ENCODE measurements at regions of chr16 and their contacts with region 1.

Region 1: DNA sequence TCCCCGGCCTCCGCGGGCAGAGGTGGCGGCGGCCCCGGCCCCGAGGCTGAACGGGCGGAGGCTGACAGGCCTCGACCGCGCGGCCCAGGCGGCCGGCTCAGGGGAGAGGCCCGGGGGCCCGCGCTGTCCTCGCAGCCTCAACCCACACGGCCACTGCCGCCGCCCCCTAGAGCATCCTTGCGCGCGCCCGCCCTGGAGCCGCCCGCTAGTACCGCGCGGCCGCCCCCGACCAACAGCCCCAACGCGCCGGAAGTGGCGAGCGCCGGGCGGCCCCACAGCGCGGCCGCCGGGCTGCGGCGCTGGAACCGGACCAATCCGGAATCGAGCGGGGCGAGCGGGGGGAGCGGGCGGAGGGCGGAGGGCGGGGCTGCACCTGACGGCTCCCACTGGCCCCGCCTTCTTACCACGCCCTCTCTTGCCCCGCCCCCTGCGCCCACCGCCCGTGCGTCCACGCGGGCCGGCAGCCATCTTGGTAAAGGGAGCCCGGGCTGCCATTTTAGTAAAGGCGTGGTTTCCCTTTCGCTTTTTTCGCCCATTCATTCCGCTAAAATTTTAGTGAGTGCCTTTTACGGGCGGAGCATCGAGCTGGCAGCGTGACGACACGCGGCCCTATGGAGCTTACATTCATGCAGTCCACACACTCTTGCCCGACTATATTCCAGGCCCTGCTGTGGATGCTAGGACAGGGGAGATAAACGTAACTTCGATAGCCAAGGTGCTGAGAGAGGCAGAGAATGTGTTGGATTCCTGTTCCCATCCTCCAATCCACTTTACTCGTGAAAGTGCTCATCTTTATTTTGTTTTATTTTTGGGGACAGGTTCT is at the start of gene XPO6:
- DNase-seq: peak; percentile 96 to 100 (median 99)
- ATAC-seq: peak; percentile 90
- H3K4me3 ChIP-seq: peak within 1 kb of the TSS; percentile 69 to 91
- H3K4me3 Mint-ChIP-seq: peak within 1 kb of the TSS; percentile 90
- H3K27ac ChIP-seq: peak within 1 kb of the TSS; percentile 75 to 76
- H3K27ac Mint-ChIP-seq: peak within 1 kb of the TSS; percentile 91
- H3K4me1 ChIP-seq: peaks cover 32% of the 10 kb centered on the region
- H3K4me1 Mint-ChIP-seq: peaks cover 37% of the 10 kb centered on the region
- H3K27me3 ChIP-seq: no peaks in the 10 kb centered on the region
- H3K27me3 Mint-ChIP-seq: no peaks in the 10 kb centered on the region
- CTCF ChIP-seq: no peak
- total RNA-seq, gene XPO6: 355 to 369 TPM

Region 2: DNA sequence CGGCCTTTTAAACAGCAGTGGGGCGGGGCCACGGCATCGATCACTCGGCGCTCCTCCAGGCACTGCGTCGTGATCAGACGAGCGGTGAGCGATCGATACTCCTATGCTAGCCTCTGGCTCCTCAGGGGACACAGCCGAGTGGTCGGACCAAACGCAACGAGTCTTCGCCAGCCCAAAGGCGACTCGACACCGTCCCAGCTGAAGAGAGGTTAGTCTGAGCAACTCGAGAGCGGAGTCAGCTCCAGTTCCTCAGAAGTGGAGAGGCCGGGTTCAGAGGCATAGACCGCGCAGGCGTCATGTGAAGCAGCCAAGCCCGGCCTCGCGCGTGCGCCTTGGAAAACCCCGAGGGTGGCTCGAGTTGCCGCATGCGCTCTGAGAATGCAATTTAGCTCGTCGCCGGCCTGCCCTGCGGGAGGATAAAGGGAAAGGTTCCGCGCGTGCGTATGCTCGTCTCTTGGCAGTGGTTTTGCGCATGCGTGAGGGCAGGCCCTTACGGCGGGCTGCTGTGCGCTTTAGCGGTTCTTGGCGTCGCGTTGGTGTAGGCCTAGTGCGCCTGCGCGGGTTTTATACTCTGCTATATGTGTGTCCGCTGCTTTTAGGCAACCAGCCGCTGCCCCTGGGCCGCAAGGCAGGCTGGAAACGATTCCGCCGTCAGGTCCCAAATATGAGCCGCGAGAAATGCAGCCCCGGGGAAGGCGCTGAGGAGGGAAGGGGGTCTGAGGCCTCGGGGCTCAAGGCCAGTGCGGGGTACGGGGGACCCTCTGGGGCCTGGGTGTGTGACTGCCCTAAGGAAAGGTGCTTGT is 1008.3 kb before region 1 on chr16 and contains the start of gene KDM8:
- CTCF ChIA-PET with region 1: no interaction called
- POLR2A ChIA-PET with region 1: no interaction called
- intact Hi-C with region 1: loop called in 1 of 2 experiments (anchors 5 kb)
- DNase-seq: peak; percentile 99 to 100 (median 100)
- ATAC-seq: peak; percentile 85
- H3K4me3 ChIP-seq: peak within 1 kb of the TSS; percentile 83 to 93
- H3K4me3 Mint-ChIP-seq: peak within 1 kb of the TSS; percentile 96
- H3K27ac ChIP-seq: peak within 1 kb of the TSS; percentile 83 to 97
- H3K27ac Mint-ChIP-seq: peak within 1 kb of the TSS; percentile 99
- H3K4me1 ChIP-seq: peaks cover 54% of the 10 kb centered on the region
- H3K4me1 Mint-ChIP-seq: peaks cover 61% of the 10 kb centered on the region
- H3K27me3 ChIP-seq: no peaks in the 10 kb centered on the region
- H3K27me3 Mint-ChIP-seq: no peaks in the 10 kb centered on the region
- CTCF ChIP-seq: no peak
- total RNA-seq, gene KDM8: 17.6 to 22.6 TPM

Region 3: GRCh38 chr16:28188085-28188916 is 23.6 kb before region 1 on chr16:
- CTCF ChIA-PET with region 1: interaction called, 14 read pairs
- POLR2A ChIA-PET with region 1: interaction called, 17 read pairs
- intact Hi-C with region 1: loop called (anchors 1 kb)
- DNase-seq: peak in 1 of 9 experiments; percentile 38
- ATAC-seq: no peak
- H3K4me3 ChIP-seq: peak overlapping the region in 1 of 2 experiments; percentile 21
- H3K4me3 Mint-ChIP-seq: peak overlapping the region; percentile 66
- H3K27ac ChIP-seq: peak overlapping the region; percentile 26 to 79
- H3K27ac Mint-ChIP-seq: peak overlapping the region; percentile 98
- H3K4me1 ChIP-seq: peaks cover 85% of the 10 kb centered on the region
- H3K4me1 Mint-ChIP-seq: peaks cover 87% of the 10 kb centered on the region
- H3K27me3 ChIP-seq: no peaks in the 10 kb centered on the region
- H3K27me3 Mint-ChIP-seq: no peaks in the 10 kb centered on the region
- CTCF ChIP-seq: no peak

Region 4: DNA sequence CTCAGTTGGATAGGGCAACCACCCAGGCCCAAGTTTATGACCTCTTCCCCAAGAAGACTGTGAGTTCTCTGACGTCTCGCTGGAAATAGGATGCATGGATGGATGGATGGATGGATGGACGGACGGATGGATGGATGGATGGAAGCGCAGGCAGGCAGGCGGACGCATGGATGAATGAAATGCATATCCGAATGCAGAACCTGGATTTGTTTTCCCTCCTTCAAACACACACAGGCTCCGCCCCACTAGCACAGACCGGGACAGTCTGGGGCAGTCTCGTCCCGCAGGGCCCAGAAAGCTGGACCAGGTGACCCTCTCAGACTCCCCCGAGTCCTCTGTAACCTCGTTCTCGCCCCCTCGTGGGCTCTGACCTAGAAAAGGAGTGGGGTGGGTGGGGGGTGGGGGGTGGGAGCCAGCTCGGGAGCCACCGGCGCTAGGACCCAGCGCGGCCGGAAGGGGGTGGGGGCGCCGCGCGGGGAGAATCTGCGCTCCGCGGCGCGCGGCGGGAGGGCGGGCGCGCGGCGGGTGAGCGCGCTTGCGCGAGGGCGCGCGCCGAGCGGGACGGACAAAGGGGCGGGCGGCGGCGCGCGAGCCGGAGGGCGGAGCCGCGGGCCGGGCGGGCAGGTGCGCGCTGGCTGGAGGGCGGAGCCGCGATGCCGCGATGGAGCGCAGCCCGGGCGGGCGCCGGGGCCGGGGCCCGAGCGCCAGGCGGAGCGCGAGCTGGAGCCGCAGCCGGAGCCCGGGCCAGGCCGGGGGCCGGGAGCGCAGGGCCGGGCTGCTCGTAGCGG is 80.1 kb after region 1 on chr16 and contains the start of gene SBK1:
- CTCF ChIA-PET with region 1: no interaction called
- POLR2A ChIA-PET with region 1: no interaction called
- intact Hi-C with region 1: loop called in 1 of 2 experiments (anchors 2 kb)
- DNase-seq: peak; percentile 68 to 94 (median 84)
- ATAC-seq: peak; percentile 90
- H3K4me3 ChIP-seq: peak within 1 kb of the TSS; percentile 82 to 92
- H3K4me3 Mint-ChIP-seq: peak within 1 kb of the TSS; percentile 94
- H3K27ac ChIP-seq: peak within 1 kb of the TSS; percentile 56 to 75
- H3K27ac Mint-ChIP-seq: peak within 1 kb of the TSS; percentile 93
- H3K4me1 ChIP-seq: peaks cover 74% of the 10 kb centered on the region
- H3K4me1 Mint-ChIP-seq: peaks cover 67% of the 10 kb centered on the region
- H3K27me3 ChIP-seq: no peaks in the 10 kb centered on the region
- H3K27me3 Mint-ChIP-seq: no peaks in the 10 kb centered on the region
- CTCF ChIP-seq: no peak
- total RNA-seq, gene SBK1: 16.5 to 17.1 TPM

Region 5: GRCh38 chr16:28553776-28554633 is 342.1 kb after region 1 on chr16 and contains the start of gene SGF29:
- CTCF ChIA-PET with region 1: no interaction called
- POLR2A ChIA-PET with region 1: no interaction called
- intact Hi-C with region 1: loop called in 1 of 2 experiments (anchors 5 kb)
- DNase-seq: peak; percentile 86 to 97 (median 93)
- ATAC-seq: peak; percentile 93
- H3K4me3 ChIP-seq: peak within 1 kb of the TSS; percentile 87 to 99
- H3K4me3 Mint-ChIP-seq: peak within 1 kb of the TSS; percentile 92
- H3K27ac ChIP-seq: peak within 1 kb of the TSS; percentile 95 to 98
- H3K27ac Mint-ChIP-seq: peak within 1 kb of the TSS; percentile 98
- H3K4me1 ChIP-seq: peaks cover 18% of the 10 kb centered on the region
- H3K4me1 Mint-ChIP-seq: peaks cover 36% of the 10 kb centered on the region
- H3K27me3 ChIP-seq: no peaks in the 10 kb centered on the region
- H3K27me3 Mint-ChIP-seq: no peaks in the 10 kb centered on the region
- CTCF ChIP-seq: no peak
- total RNA-seq, gene SGF29: 41.1 to 44.5 TPM